MCF 10A (cell line): ENCODE measurements at regions of chr2 and their contacts with region 1.

Region 1: DNA sequence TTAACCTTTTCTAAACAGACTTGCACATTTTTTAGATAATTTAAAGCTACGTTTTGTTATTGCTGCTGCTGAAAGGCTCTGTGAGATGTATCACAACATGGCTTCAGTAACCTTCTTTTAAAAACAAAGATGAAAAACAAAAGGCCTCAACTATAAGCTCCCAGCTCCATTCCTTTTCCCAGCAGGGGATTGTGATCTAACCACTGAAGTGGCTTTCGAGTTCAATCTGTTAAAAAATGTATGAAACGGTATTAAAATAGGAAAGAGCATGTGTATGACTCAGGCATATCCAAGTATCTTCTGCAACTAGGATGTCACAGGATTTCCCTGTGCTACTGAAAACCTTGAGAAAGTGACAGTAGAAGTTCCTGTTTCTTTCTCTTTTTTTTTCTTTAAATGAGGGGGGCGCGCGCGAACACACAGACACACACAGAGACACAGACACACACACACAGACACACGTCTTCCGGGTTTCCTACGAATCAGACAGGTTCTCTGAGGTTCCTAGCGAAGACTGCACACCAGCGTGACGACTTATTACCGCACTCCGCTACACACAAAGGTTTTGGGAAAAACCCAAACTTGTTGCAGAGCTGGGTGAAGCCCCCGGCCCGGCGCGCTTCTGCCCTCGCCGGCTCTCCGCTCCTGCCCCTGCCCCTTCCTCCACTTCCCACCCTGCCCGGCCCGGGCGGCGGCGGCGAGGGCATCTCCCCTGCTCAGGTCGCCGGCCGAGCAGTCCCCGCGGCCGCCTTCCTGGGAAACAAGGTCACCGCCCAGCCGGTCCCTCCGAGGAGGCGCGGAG is 86.8 kb downstream of the RBMS1 start:
- DNase-seq: peak; percentile 73
- H3K4me3 Mint-ChIP-seq: peak overlapping the region; percentile 92
- H3K27ac Mint-ChIP-seq: peak overlapping the region; percentile 85
- H3K4me1 Mint-ChIP-seq: peaks cover 39% of the 10 kb centered on the region
- H3K27me3 Mint-ChIP-seq: no peaks in the 10 kb centered on the region
- CTCF ChIP-seq: no peak

Region 2: GRCh38 chr2:158926478-158926948 is 1480.3 kb before region 1 on chr2:
- CTCF ChIA-PET with region 1: no interaction called
- POLR2A ChIA-PET with region 1: no interaction called
- intact Hi-C with region 1: no loop called
- DNase-seq: peak; percentile 81
- H3K4me3 Mint-ChIP-seq: peak overlapping the region; percentile 35
- H3K27ac Mint-ChIP-seq: peak overlapping the region; percentile 70
- H3K4me1 Mint-ChIP-seq: peaks cover 22% of the 10 kb centered on the region
- H3K27me3 Mint-ChIP-seq: no peaks in the 10 kb centered on the region
- CTCF ChIP-seq: no peak

Region 3: DNA sequence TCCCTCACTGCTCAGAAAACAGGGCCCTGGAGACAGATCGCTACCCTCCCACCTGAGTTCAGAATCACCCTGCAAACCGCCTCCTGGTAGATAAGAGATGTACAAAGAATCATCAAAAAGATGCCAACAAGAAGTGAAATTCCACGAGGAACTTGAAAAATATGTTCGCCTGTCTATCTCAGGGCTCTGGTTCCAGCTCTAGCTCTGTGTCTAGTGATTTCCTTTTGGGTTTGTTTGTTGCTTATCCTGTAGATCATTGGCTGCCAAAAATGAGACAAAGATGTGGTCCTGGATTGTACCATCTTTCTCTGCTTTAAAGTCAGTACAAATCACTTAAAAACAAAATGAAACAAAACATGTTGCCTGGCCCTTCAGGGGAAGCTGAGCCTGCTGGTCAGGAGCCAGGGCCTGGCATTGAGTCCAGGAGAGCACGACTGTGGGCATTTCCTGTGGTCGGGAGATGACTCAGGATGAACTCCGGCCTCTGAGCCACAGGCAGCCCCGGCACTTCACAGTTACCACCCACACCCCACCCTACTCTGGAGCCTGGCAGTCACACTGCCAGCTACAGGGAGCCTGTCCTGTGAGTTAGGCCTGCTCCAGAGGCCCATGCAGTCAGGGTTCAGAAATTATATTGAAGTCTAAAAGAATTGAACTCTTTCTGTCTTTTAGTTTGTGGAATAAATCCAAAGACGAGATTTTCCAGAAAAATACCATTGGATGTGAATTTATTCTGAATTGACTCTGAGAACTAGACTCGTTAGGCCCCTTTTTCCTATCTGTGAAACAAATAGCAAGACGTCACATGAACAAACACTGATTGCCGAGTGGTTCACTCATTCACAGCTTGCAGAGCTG is 198.8 kb before region 1 on chr2:
- CTCF ChIA-PET with region 1: no interaction called
- POLR2A ChIA-PET with region 1: no interaction called
- intact Hi-C with region 1: no loop called
- DNase-seq: peak; percentile 98
- H3K4me3 Mint-ChIP-seq: peak overlapping the region; percentile 68
- H3K27ac Mint-ChIP-seq: peak overlapping the region; percentile 90
- H3K4me1 Mint-ChIP-seq: peaks cover 53% of the 10 kb centered on the region
- H3K27me3 Mint-ChIP-seq: no peaks in the 10 kb centered on the region
- CTCF ChIP-seq: no peak

Region 4: GRCh38 chr2:160224060-160224459 is 182.7 kb before region 1 on chr2:
- CTCF ChIA-PET with region 1: no interaction called
- POLR2A ChIA-PET with region 1: interaction called, 5 read pairs
- intact Hi-C with region 1: loop called (anchors 10 kb)
- DNase-seq: peak; percentile 97
- H3K4me3 Mint-ChIP-seq: peak overlapping the region; percentile 48
- H3K27ac Mint-ChIP-seq: peak overlapping the region; percentile 99
- H3K4me1 Mint-ChIP-seq: peaks cover 92% of the 10 kb centered on the region
- H3K27me3 Mint-ChIP-seq: no peaks in the 10 kb centered on the region
- CTCF ChIP-seq: no peak

Region 5: DNA sequence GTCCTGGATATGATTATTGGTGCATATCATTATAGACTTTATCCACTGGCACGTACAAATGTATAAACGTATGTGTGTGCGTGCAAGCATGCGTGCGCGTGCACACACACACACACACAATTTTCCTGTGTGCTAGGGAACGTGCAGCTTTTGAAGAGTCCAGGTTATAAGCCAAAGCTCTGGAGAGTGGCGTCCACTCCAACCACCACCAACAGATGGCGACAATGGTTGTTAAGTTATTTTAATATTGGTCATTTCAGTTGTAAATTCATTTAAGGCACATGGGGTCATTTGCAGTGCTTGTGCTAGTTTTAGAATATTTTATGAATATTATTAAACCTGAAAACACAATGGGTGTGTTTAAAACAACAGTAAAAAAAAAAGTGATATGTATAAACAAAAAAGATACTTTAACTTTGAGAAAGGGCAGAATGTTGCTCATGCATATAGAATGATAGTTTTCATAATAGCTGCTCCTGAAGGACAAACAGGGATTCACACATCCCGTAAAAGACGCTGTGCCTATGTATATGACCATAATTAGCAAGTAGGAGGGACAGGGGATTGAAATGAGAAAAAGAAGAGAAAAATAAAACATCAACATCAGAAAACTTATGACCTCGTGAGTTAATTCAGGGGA is 82.5 kb before region 1 on chr2:
- CTCF ChIA-PET with region 1: interaction called, 33 read pairs
- POLR2A ChIA-PET with region 1: interaction called, 13 read pairs
- intact Hi-C with region 1: loop called (anchors 2 kb)
- DNase-seq: peak; percentile 66
- H3K4me3 Mint-ChIP-seq: no peak overlapping the region
- H3K27ac Mint-ChIP-seq: peak overlapping the region; percentile 36
- H3K4me1 Mint-ChIP-seq: peaks cover 30% of the 10 kb centered on the region
- H3K27me3 Mint-ChIP-seq: no peaks in the 10 kb centered on the region
- CTCF ChIP-seq: peak; percentile 71

Region 6: DNA sequence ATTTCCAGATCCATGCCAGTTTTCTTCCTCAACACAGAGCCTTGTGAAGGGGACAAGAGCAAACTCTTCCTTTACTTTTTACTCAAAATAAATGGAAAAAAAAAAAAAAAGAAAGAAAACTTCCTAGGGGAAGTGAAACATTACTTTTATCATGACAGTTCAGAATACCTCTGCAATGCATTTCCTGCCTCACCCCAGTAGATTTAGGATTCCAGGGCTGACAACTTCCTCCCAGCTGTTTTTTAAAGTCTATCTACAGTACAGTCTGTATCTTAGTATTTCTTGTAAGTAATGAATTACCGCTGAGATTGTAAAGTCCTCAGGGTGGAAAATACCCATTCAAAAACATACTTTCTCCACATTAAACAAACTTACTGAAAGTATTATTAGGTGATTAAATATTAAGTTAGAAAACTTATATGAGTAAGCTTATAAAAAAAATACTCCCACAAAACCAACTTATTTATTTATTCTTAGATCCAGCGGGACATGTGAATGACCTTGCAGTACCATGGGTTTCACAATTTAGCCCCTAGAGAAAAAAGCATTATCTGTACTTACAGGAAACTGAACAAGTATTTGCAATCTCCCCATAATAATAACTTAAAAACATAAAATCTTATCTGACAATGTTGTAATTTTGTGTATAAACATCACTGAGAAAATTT is 30.9 kb before region 1 on chr2:
- CTCF ChIA-PET with region 1: interaction called, 8 read pairs
- POLR2A ChIA-PET with region 1: interaction called, 84 read pairs
- intact Hi-C with region 1: no loop called
- DNase-seq: peak; percentile 57
- H3K4me3 Mint-ChIP-seq: peak overlapping the region; percentile 12
- H3K27ac Mint-ChIP-seq: peak overlapping the region; percentile 85
- H3K4me1 Mint-ChIP-seq: peaks cover 63% of the 10 kb centered on the region
- H3K27me3 Mint-ChIP-seq: no peaks in the 10 kb centered on the region
- CTCF ChIP-seq: no peak

Region 7: GRCh38 chr2:160394153-160394552 is 12.6 kb before region 1 on chr2:
- CTCF ChIA-PET with region 1: interaction called, 6 read pairs
- POLR2A ChIA-PET with region 1: interaction called, 120 read pairs
- intact Hi-C with region 1: no loop called
- DNase-seq: no peak
- H3K4me3 Mint-ChIP-seq: no peak overlapping the region
- H3K27ac Mint-ChIP-seq: peak overlapping the region; percentile 29
- H3K4me1 Mint-ChIP-seq: peaks cover 27% of the 10 kb centered on the region
- H3K27me3 Mint-ChIP-seq: no peaks in the 10 kb centered on the region
- CTCF ChIP-seq: no peak

Region 8: DNA sequence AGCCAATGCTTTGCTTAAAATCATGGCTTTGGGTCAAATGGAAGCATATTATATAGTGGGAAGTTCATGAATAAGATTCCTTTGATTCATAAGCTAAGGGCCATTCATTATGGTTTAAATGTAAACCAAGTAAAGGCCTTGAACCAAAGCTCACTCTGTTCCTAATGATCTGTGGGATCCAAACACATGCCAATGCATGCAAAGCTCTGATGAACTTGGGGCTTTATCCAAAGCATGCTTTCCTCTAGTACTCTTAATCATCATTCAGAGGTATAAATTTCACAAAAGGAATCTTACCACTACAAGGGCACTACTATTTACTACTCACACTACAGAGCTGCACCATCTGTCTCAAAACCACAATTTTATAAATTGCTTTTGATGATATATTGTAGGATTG is 189.6 kb after region 1 on chr2:
- CTCF ChIA-PET with region 1: no interaction called
- POLR2A ChIA-PET with region 1: no interaction called
- intact Hi-C with region 1: no loop called
- DNase-seq: no peak
- H3K4me3 Mint-ChIP-seq: no peak overlapping the region
- H3K27ac Mint-ChIP-seq: no peak overlapping the region
- H3K4me1 Mint-ChIP-seq: peaks cover 3% of the 10 kb centered on the region
- H3K27me3 Mint-ChIP-seq: no peaks in the 10 kb centered on the region
- CTCF ChIP-seq: no peak

Region 9: DNA sequence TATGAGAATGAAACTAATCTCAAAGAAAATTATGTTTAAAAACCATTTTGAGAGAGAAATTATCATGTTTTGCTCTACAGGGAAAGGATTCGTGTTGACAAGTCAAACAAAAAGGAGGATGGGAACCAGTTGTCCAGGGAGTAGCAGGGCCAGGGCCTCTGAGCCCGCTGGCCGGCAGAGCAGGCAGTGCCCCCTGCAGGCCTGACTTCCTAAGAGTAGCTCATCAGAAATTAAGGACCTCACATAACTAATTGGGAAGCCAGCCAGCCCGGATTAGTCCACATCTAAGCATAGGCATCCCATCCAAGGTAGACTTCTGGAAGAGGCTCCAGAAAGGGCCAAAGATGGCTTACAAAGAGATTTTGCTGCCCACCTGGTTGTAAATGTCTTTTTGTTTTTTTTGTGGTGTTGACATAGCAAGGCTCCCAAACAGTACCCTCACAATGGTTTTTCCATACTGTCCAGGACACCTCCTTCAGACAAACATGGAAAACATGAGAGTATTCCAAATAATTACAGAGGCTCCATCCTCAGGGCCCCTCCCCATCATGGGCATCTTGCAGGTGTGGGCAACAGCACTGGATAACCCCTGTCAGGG is 512.2 kb after region 1 on chr2:
- CTCF ChIA-PET with region 1: no interaction called
- POLR2A ChIA-PET with region 1: no interaction called
- intact Hi-C with region 1: loop called (anchors 1 kb)
- DNase-seq: peak; percentile 79
- H3K4me3 Mint-ChIP-seq: no peak overlapping the region
- H3K27ac Mint-ChIP-seq: no peak overlapping the region
- H3K4me1 Mint-ChIP-seq: no peaks in the 10 kb centered on the region
- H3K27me3 Mint-ChIP-seq: no peaks in the 10 kb centered on the region
- CTCF ChIP-seq: peak; percentile 71